HEK293 (cell line): ENCODE measurements at regions of chr18 and their contacts with region 1.

Region 1: DNA sequence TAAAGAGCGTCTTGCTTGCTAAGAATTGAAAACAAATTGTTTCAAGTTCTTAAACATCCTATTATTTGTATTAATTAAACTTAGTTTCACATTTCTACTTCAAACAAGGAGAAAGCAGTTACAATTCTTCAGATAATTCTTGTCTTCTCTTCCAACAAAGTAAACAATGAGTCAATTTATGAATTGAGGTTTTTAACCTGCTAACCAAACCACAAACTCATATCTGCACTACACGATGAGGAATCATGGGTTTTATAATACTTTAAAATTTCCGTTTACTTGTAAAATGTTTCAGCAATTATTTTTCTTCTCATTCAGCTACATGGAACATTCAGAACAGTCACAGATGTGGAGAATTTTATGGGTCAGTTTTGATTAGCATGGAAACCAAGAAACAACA is 114.2 kb downstream of the SPIRE1 start:
- H3K4me3 ChIP-seq: no peak overlapping the region
- H3K27ac ChIP-seq: no peak overlapping the region
- H3K4me1 ChIP-seq: no peaks in the 10 kb centered on the region
- CTCF ChIP-seq: no peak

Region 2: DNA sequence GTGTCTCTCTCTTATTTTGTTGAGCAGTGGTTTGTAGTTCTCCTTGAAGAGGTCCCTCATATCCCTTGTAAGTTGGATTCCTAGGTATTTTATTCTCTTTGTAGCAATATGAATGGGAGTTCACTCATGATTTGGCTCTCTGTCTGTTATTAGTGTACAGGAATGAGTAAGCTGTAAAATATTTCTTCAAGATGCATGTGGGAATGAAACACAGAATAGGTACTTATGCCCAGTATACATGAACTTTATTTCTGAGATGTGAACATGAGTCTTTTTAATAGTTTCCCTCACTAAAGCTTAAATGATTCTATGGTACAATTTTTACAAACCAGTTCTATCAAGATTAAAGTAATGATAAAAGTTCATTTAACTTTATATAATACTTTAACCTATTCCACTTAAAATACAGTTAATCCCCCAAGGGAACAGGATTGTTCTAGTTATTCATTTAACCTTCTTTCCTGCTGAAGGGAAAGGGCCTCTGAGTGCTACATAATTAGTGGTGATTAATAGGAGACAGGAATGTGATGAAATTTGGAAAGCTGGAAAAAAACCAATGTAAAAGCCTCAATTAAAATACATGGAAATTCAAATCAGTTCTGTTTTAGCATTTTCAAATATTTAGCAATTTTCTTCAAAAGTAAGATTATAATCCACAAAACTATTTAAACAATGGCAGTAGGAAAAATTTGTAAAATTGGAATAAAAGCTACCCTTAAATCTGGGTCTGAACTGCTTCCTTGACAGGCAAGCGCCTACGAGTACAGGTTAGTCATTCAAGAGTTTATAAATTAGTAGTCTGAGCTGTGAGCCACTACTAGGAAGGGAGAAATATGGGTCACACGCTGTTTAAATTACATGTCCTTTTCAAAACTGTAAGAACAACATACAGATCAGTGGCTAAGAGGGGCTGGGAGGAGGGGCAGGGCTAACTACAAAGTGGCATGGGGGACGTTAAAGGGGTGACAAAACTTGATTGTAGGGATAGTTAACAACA is 85.3 kb after region 1 on chr18:
- CTCF ChIA-PET with region 1: no interaction called
- POLR2A ChIA-PET with region 1: no interaction called
- H3K4me3 ChIP-seq: no peak overlapping the region
- H3K27ac ChIP-seq: no peak overlapping the region
- H3K4me1 ChIP-seq: peaks cover 6% of the 10 kb centered on the region
- CTCF ChIP-seq: no peak

Region 3: GRCh38 chr18:12657684-12658425 is 114.2 kb after region 1 on chr18 and contains the start of gene SPIRE1:
- CTCF ChIA-PET with region 1: interaction called, 10 read pairs
- POLR2A ChIA-PET with region 1: interaction called, 3 read pairs
- H3K4me3 ChIP-seq: peak within 1 kb of the TSS; percentile 76
- H3K27ac ChIP-seq: peak within 1 kb of the TSS; percentile 91
- H3K4me1 ChIP-seq: peaks cover 5% of the 10 kb centered on the region
- CTCF ChIP-seq: peak; percentile 59